Activated CD8-positive, alpha-beta T cell treated with anti-CD3 and anti-CD28 coated beads, Interleukin-2, amount 10 ng/mL, durations not matched to agents 7 days and 5 days (primary cell): ENCODE measurements at regions of chr22 and their contacts with region 1.

Region 1: GRCh38 chr22:43346521-43346929 is 3.4 kb upstream of the SCUBE1 start:
- DNase-seq: peak; percentile 77
- ATAC-seq: peak; percentile 78
- H3K4me3 Mint-ChIP-seq: no peak overlapping the region
- H3K27ac Mint-ChIP-seq: no peak overlapping the region
- H3K4me1 Mint-ChIP-seq: peaks cover 12% of the 10 kb centered on the region
- H3K27me3 Mint-ChIP-seq: peaks cover 35% of the 10 kb centered on the region

Region 2: GRCh38 chr22:43249789-43250471 is 96.6 kb before region 1 on chr22:
- CTCF ChIA-PET with region 1: interaction called, 10 read pairs
- POLR2A ChIA-PET with region 1: no interaction called
- DNase-seq: no peak
- ATAC-seq: no peak
- H3K4me3 Mint-ChIP-seq: no peak overlapping the region
- H3K27ac Mint-ChIP-seq: no peak overlapping the region
- H3K4me1 Mint-ChIP-seq: no peaks in the 10 kb centered on the region
- H3K27me3 Mint-ChIP-seq: no peaks in the 10 kb centered on the region

Region 3: GRCh38 chr22:43273902-43274484 is 72.5 kb before region 1 on chr22:
- CTCF ChIA-PET with region 1: interaction called, 171 read pairs
- POLR2A ChIA-PET with region 1: no interaction called
- DNase-seq: peak; percentile 60
- ATAC-seq: peak; percentile 70
- H3K4me3 Mint-ChIP-seq: no peak overlapping the region
- H3K27ac Mint-ChIP-seq: no peak overlapping the region
- H3K4me1 Mint-ChIP-seq: peaks cover 10% of the 10 kb centered on the region
- H3K27me3 Mint-ChIP-seq: peaks cover 2% of the 10 kb centered on the region

Region 4: DNA sequence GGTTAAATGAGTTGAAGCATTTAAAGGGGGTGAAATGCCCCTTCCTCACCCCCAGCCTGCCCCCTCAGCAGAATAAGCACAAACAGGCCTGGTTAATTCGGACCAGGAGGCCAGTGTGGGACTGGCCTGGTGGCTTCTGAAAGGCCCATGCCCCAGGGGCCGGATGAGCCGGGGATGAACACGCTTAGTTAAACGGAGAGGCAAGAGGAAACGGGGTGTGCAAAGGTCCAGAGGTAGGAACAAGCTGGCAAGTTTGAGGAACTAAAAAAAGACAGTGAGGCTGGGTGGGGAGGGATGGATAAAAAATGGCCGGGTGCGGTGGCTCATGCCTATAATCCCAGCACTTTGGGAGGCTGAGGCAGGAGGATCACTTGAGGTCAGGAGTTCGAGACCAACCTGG is 14.8 kb before region 1 on chr22:
- CTCF ChIA-PET with region 1: interaction called, 29 read pairs
- POLR2A ChIA-PET with region 1: no interaction called
- DNase-seq: no peak
- ATAC-seq: no peak
- H3K4me3 Mint-ChIP-seq: no peak overlapping the region
- H3K27ac Mint-ChIP-seq: no peak overlapping the region
- H3K4me1 Mint-ChIP-seq: peaks cover 5% of the 10 kb centered on the region
- H3K27me3 Mint-ChIP-seq: no peaks in the 10 kb centered on the region

Region 5: DNA sequence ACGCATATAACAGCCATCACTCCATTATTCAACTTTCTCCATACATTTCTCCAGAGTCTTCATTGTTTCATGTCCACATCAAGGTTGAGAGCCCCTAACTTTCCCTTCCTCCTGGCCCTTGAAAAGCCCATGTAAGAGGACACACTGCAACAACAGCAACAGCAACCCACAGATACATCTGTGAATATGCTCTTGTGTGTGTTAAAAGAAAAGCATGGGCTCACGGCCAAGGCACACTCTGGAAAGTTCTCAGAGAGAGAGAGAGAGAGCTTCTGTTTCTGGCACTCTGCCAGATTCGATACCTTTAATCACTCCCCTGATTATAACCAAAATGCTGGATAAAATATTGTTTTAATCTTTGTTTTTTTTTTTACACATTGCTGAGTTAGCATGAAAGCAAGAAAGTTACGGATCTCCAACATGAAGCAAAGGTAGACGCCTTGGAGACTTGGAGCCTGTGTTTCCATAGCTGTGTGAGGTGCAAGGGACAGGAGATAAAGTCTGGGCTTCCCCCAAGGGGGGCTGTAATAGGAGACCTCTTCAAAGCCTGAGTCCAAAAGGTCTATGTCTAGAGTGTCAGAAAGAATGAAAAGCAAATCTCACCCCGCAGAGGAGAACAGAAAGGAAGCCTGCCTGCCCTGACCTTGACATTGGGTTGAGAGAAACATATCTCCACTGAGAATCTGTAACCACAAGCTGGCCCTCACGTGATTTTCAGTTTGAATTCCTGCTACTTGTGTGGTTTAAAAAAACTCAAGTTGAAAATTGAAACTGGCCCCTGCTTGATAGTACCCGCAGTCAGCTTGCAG is 31.6 kb after region 1 on chr22:
- CTCF ChIA-PET with region 1: interaction called, 13 read pairs
- POLR2A ChIA-PET with region 1: no interaction called
- DNase-seq: peak; percentile 28
- ATAC-seq: peak; percentile 28
- H3K4me3 Mint-ChIP-seq: no peak overlapping the region
- H3K27ac Mint-ChIP-seq: no peak overlapping the region
- H3K4me1 Mint-ChIP-seq: peaks cover 36% of the 10 kb centered on the region
- H3K27me3 Mint-ChIP-seq: peaks cover 53% of the 10 kb centered on the region

Region 6: GRCh38 chr22:43467216-43467940 is 120.9 kb after region 1 on chr22:
- CTCF ChIA-PET with region 1: no interaction called
- POLR2A ChIA-PET with region 1: no interaction called
- DNase-seq: no peak
- ATAC-seq: no peak
- H3K4me3 Mint-ChIP-seq: no peak overlapping the region
- H3K27ac Mint-ChIP-seq: no peak overlapping the region
- H3K4me1 Mint-ChIP-seq: no peaks in the 10 kb centered on the region
- H3K27me3 Mint-ChIP-seq: no peaks in the 10 kb centered on the region